Dendritic cell treated with granulocyte-macrophage colony-stimulating factor and Interleukin-4, amounts not matched to agents 40 ng/mL and 50 ng/mL, for 4 days (primary cell): ENCODE measurements at regions of chr6 and their contacts with region 1.

Region 1: DNA sequence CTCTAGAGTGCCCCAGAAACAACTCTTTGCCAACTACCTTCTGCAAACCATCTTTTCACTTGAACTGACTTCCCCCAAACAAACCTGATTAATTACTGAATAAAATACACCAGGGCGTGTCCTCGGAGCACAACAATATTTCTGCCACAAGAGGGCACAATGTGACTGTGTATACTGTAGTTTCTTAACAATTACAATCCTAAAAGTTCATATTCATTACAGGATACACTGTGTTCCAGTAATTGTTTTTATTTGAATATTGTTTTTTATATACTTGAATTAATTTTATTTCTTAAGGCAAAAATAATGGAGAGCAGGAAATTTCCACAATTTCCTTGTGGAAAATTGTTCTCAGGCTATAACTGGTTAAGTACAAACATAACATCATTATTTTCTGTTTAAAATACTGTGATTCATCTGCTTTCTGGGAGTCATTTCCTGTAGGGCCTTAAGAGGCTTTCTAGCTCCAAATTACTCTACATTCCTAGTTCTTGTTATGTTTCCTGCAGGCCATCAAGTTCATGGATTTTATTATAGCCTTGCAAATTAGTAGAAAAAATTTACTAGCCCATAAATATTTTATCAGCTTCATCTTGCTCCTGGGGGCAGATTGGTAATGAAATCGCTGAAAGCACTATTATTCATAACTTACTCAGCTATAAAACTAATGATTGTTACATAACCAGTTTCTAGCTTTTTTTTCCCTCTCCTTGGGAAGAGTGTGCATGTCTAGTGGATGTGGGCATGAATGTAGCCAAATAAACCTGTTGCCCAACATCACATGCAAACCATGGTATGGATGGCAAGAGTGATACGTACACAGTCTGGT is 51.9 kb upstream of the SLC22A16 start:
- H3K4me3 Mint-ChIP-seq: no peak overlapping the region
- H3K27ac Mint-ChIP-seq: no peak overlapping the region
- H3K4me1 Mint-ChIP-seq: peaks cover 31% of the 10 kb centered on the region
- H3K27me3 Mint-ChIP-seq: no peaks in the 10 kb centered on the region

Region 2: DNA sequence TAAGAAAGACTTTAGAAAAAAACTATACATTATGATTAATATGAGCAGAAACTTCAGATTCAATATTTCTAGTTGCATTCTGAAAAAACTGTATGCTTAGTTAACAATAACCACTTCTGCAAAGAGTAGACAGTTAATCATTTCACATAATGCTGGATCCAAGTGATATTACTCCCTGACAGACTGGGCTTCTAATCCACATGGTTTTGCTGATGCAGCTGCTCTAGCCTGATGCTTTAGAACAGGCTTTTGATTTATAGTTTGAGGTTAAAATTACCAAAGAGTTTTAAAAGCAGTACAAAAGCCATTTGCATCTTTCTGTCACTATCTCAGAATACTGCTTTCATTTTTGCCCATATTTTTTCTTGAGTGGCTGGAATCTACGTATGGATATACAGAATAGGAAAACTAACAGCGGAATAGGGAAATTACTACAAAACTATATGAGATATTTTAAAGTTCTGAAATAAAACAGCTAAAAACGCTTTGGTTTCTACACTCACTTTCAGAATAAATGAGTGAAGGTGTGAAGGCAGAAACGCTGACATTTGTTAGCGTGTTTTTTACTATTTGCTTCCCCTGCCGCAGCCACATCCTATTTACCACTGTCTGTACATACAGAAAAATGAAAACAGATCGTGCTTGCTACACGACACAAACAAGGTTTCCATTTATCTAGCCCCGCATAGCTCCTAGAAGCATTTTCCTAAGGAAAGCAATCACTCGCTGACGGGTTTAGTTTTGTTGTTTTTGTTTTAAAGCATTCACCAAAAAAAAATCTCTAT is 231.9 kb before region 1 on chr6:
- intact Hi-C with region 1: no loop called
- H3K4me3 Mint-ChIP-seq: no peak overlapping the region
- H3K27ac Mint-ChIP-seq: no peak overlapping the region
- H3K4me1 Mint-ChIP-seq: no peaks in the 10 kb centered on the region
- H3K27me3 Mint-ChIP-seq: peaks cover 3% of the 10 kb centered on the region

Region 3: GRCh38 chr6:110949679-110950285 is 421.5 kb after region 1 on chr6:
- intact Hi-C with region 1: loop called (anchors 1 kb)
- H3K4me3 Mint-ChIP-seq: no peak overlapping the region
- H3K27ac Mint-ChIP-seq: no peak overlapping the region
- H3K4me1 Mint-ChIP-seq: peaks cover 3% of the 10 kb centered on the region
- H3K27me3 Mint-ChIP-seq: no peaks in the 10 kb centered on the region

Region 4: DNA sequence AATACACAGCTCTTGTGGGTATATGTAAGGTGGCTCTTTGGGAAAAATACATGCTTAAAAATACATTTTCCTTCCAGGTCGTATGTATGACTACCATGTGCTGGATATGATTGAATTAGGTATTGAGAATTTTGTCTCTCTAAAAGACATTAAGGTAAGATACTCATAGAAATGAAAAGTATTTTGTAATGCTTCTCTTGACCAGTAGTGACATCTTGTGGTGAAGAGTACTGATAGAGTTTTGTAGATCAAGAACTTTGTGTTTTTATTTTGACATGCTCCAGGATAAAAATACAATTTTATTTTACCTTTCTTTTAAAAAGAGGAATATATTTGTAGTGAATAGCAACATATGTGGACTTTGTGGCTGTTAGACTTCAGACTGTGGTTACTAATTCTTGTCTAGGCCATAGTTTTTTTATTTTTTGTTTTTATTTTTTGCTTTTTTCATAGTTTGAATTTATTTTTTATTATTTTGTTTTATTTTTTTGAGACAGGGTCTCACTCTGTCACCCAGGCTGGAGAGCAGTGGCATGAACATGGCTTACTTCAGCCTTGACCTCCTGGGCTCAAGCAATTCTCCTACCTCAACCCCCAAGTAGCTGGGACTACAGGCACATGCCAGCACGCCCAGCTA is 471.4 kb after region 1 on chr6:
- intact Hi-C with region 1: loop called (anchors 1 kb)
- H3K4me3 Mint-ChIP-seq: no peak overlapping the region
- H3K27ac Mint-ChIP-seq: no peak overlapping the region
- H3K4me1 Mint-ChIP-seq: no peaks in the 10 kb centered on the region
- H3K27me3 Mint-ChIP-seq: no peaks in the 10 kb centered on the region

Region 5: GRCh38 chr6:111210194-111210728 is 681.9 kb after region 1 on chr6:
- intact Hi-C with region 1: loop called (anchors 10 kb)
- H3K4me3 Mint-ChIP-seq: no peak overlapping the region
- H3K27ac Mint-ChIP-seq: no peak overlapping the region
- H3K4me1 Mint-ChIP-seq: peaks cover 6% of the 10 kb centered on the region
- H3K27me3 Mint-ChIP-seq: no peaks in the 10 kb centered on the region